PC-3 (cell line): ENCODE measurements at regions of chr4 and their contacts with region 1.

Region 1: DNA sequence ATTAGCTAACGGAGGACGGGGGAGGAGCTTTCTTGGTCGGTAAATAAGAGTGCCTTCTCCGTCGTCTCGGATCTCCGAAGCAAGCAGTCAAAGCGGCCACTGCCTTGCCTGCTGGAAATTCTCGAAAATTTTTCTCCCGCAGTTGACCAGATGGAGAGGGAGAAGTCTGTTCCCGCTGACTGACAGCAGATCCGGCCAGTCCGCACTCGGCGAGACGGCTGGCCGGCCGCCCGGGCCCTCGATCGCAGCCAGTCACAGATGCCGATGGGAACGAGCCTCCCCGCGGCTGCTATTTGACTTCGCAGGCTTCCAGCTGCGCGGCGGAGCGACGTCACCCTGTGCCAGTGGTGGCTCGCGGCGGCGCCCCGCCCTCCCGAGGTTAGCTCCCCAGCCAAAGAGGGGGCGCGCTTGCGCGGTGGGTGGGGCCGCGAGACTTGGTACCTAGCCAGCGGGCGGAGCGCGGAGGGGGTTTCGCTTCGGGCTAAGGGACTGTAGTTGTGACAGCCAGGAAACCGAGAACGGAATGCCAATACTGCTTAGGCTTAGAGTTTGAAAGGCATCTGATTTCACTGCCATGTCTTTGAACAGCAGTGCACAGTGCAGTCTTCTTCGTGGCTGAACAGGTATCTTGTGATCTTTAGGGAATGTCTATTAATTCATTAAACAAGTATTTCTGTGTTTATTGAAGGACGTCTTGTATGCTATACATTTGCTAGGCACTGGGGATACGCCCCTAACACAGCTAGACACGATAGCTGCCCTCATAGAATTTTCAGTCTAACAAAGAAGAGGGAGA is at the start of gene PPM1K:
- DNase-seq: peak; percentile 96
- ATAC-seq: peak; percentile 91
- H3K4me3 ChIP-seq: peak within 1 kb of the TSS; percentile 88
- H3K27ac ChIP-seq: peak within 1 kb of the TSS; percentile 68
- H3K4me1 ChIP-seq: peaks cover 21% of the 10 kb centered on the region
- H3K27me3 ChIP-seq: no peaks in the 10 kb centered on the region
- CTCF ChIP-seq: no peak
- total RNA-seq, gene PPM1K: 3.0 and 5.7 TPM in 2 replicates

Region 2: GRCh38 chr4:88318861-88319344 is 34.3 kb after region 1 on chr4:
- CTCF ChIA-PET with region 1: no interaction called
- POLR2A ChIA-PET with region 1: interaction called, 4 read pairs
- intact Hi-C with region 1: loop called (anchors 2 kb)
- DNase-seq: peak; percentile 93
- ATAC-seq: peak; percentile 82
- H3K4me3 ChIP-seq: peak overlapping the region; percentile 32; the same call in 1 of the 2 replicates
- H3K27ac ChIP-seq: peak overlapping the region; percentile 93
- H3K4me1 ChIP-seq: peaks cover 34% of the 10 kb centered on the region
- H3K27me3 ChIP-seq: no peaks in the 10 kb centered on the region
- CTCF ChIP-seq: no peak

Region 3: DNA sequence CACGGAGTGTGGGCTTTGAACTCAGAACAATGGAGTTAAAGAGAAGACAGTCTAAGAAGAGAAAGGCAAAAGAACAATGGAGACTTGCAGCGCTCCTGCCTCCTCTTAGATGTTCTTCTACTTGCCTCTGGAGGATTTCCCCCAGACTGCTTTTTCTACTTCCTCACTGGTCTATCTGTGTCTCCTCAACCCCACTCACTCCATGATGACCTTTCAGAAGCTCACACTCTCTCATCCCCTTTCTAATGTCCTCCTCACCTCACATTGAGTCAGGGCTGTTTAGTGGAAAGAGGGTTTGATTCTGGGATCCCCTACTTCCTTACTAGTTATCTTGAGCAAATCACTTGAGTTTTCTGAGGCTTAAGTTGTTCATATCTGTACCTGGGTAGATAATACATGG is 81.8 kb after region 1 on chr4:
- CTCF ChIA-PET with region 1: no interaction called
- POLR2A ChIA-PET with region 1: no interaction called
- intact Hi-C with region 1: loop called (anchors 5 kb)
- DNase-seq: no peak
- ATAC-seq: no peak
- H3K4me3 ChIP-seq: no peak overlapping the region
- H3K27ac ChIP-seq: no peak overlapping the region
- H3K4me1 ChIP-seq: no peaks in the 10 kb centered on the region
- H3K27me3 ChIP-seq: no peaks in the 10 kb centered on the region
- CTCF ChIP-seq: no peak

Region 4: DNA sequence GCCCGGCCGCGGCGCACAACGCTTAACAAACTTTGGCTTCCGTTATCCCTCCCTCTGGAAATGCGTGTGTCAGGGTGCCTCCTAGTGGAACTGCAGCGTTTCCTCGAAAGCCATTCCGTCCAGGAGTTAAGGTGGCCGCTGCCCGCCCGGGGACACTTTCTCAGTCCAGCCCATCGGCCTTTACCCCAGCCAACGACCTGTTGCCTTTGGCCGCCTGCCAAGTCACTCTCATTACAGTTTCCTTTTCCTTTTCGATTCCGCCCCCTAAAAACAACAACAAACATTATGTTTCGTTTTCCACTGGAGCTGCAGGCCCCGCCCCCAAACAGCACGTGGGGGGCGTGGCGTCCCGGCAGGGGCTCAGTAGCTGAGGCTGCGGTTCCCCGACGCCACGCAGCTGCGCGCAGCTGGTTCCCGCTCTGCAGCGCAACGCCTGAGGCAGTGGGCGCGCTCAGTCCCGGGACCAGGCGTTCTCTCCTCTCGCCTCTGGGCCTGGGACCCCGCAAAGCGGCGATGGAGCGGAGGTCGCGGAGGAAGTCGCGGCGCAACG is 172.2 kb after region 1 on chr4 and contains the start of gene HERC5:
- CTCF ChIA-PET with region 1: no interaction called
- POLR2A ChIA-PET with region 1: no interaction called
- intact Hi-C with region 1: loop called (anchors 1 kb)
- DNase-seq: peak; percentile 85
- ATAC-seq: peak; percentile 93
- H3K4me3 ChIP-seq: peak within 1 kb of the TSS; percentile 69
- H3K27ac ChIP-seq: no peak within 1 kb of the TSS
- H3K4me1 ChIP-seq: no peaks in the 10 kb centered on the region
- H3K27me3 ChIP-seq: no peaks in the 10 kb centered on the region
- CTCF ChIP-seq: peak; percentile 64
- total RNA-seq, gene HERC5: 2.6 and 3.2 TPM in 2 replicates